Body of pancreas (tissue), 4 donors: ENCODE measurements at regions of chr2 and their contacts with region 1.

Region 1: GRCh38 chr2:38076606-38077430 is 867 bp upstream of the CYP1B1 start:
- DNase-seq: peak; percentile 62 to 68 (median 66)
- ATAC-seq: peak; percentile 76
- H3K4me3 ChIP-seq: peak overlapping the region in 1 of 2 donors; percentile 37
- H3K27ac ChIP-seq: peak overlapping the region; percentile 42 to 89 (median 80)
- H3K4me1 ChIP-seq: peaks cover 37% of the 10 kb centered on the region
- H3K27me3 ChIP-seq: no peaks in the 10 kb centered on the region
- CTCF ChIP-seq: peak in 6 of 7 experiments; percentile 21 to 61 (median 35)
- POLR2A ChIP-seq: peak; percentile 21 to 49 (median 29)

Region 2: DNA sequence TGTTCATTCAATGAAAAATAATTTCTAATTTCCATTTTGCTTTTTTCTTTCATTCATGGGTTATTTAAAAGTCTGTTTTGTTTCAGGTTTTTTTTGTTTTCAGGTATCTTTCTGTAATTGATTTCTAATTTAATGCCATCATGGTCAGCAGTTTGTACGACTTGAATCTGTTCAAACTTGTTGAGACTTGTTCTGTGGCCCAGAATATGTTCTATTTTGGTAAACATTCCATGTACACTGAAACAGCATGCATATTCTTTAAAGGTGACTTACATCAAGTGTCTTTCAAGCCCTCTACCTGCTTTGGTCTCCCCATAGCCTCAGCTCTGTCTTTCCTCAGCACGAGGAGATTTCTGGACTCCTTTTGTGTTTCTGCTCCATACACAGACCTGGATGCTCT is 50.0 kb before region 1 on chr2:
- intact Hi-C with region 1: no loop called
- DNase-seq: no peak
- ATAC-seq: no peak
- H3K4me3 ChIP-seq: no peak overlapping the region
- H3K27ac ChIP-seq: no peak overlapping the region
- H3K4me1 ChIP-seq: no peaks in the 10 kb centered on the region
- H3K27me3 ChIP-seq: no peaks in the 10 kb centered on the region
- CTCF ChIP-seq: no peak
- POLR2A ChIP-seq: no peak

Region 3: GRCh38 chr2:38274286-38275276 is 197.8 kb after region 1 on chr2:
- intact Hi-C with region 1: loop called (anchors 10 kb)
- DNase-seq: peak in 3 of 4 donors; percentile 15 to 52 (median 17)
- ATAC-seq: peak; percentile 72
- H3K4me3 ChIP-seq: no peak overlapping the region
- H3K27ac ChIP-seq: no peak overlapping the region
- H3K4me1 ChIP-seq: no peaks in the 10 kb centered on the region
- H3K27me3 ChIP-seq: no peaks in the 10 kb centered on the region
- CTCF ChIP-seq: peak in 6 of 7 experiments; percentile 25 to 71 (median 65)
- POLR2A ChIP-seq: no peak

Region 4: DNA sequence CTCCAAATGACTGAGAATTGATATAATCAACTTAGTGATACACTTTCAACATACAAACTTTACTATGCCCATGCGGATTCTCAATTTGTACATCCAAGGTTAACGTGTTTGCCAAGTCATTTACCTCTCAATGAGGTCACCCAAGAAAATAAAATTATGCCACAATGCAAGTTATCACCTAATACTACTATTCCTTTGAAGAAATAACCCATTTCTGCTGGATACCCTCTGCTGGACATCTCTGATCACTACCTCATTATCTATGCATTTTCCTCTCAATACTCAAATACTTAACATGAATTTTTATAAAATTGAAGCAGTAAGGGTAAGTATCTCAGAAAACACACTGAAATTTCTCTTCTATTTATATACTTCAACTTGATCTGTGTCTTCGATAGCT is 513.2 kb after region 1 on chr2:
- intact Hi-C with region 1: no loop called
- DNase-seq: no peak
- ATAC-seq: no peak
- H3K4me3 ChIP-seq: no peak overlapping the region
- H3K27ac ChIP-seq: no peak overlapping the region
- H3K4me1 ChIP-seq: peaks cover 5% of the 10 kb centered on the region
- H3K27me3 ChIP-seq: no peaks in the 10 kb centered on the region
- CTCF ChIP-seq: no peak
- POLR2A ChIP-seq: no peak